ENCODE measurements at regions of chr19 and their contacts with region 1.

Region 1: DNA sequence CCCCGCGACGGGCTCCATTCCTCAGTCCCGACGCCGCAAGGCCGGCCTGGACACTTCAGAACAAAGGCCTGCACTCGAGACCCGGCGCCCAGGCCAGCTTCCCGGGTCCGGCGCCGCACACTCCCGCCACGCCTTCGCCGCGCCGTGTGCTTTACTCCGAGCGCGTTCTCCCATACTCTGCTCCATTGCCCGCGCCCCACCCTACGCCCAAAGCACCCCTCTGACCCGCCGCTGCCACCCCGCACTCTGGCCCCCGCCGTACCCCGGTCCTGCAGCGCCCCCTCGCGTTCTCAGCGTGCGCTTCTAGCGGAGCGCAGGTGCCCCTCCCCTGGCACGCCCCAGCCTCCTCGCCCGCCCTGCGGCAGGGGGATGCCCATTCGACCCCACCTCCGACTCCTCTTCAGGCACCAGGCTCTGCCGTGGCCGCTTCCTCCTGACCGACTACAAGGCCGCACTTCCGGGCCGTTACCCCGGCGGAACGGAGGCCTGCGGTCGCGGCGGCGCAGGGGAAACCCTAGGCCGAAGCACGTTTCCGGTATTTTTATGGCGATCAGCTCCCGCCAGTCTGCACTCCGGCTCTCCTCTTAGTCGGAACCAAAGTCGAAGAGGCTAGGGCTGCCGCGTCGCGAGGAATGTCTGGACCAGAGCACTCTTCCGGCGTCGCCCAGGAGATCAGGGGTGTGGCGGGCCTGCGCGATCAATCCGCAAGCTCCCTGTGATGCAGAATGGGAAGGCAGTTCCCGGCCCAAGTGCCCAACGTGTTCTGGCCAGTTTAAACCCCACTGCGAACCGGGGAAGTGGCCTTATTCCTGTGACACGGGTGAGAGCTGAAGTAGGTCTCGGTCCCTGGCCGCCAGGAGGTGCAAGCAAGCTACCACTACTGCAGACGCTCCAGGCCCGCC is at the start of gene ZBTB45:
- DNase-seq: peak; percentile 94
- ATAC-seq: peak; percentile 84
- H3K4me3 Mint-ChIP-seq: peak within 1 kb of the TSS; percentile 96
- H3K27ac Mint-ChIP-seq: peak within 1 kb of the TSS; percentile 92
- H3K4me1 Mint-ChIP-seq: peaks cover 50% of the 10 kb centered on the region
- H3K27me3 Mint-ChIP-seq: no peaks in the 10 kb centered on the region
- total RNA-seq, gene ZBTB45: 15.1 to 16.9 TPM

Region 2: GRCh38 chr19:58182989-58183816 is 336.4 kb before region 1 on chr19 and contains the start of gene ZNF274:
- CTCF ChIA-PET with region 1: interaction called, 10 read pairs
- DNase-seq: peak; percentile 96
- ATAC-seq: peak; percentile 91
- H3K4me3 Mint-ChIP-seq: peak within 1 kb of the TSS; percentile 92
- H3K27ac Mint-ChIP-seq: peak within 1 kb of the TSS; percentile 100
- H3K4me1 Mint-ChIP-seq: peaks cover 22% of the 10 kb centered on the region
- H3K27me3 Mint-ChIP-seq: no peaks in the 10 kb centered on the region
- total RNA-seq, gene ZNF274: 30.1 to 36.0 TPM

Region 3: GRCh38 chr19:58296104-58296503 is 223.5 kb before region 1 on chr19:
- CTCF ChIA-PET with region 1: no interaction called
- DNase-seq: no peak
- ATAC-seq: no peak
- H3K4me3 Mint-ChIP-seq: no peak overlapping the region
- H3K27ac Mint-ChIP-seq: no peak overlapping the region
- H3K4me1 Mint-ChIP-seq: no peaks in the 10 kb centered on the region
- H3K27me3 Mint-ChIP-seq: no peaks in the 10 kb centered on the region

Region 4: DNA sequence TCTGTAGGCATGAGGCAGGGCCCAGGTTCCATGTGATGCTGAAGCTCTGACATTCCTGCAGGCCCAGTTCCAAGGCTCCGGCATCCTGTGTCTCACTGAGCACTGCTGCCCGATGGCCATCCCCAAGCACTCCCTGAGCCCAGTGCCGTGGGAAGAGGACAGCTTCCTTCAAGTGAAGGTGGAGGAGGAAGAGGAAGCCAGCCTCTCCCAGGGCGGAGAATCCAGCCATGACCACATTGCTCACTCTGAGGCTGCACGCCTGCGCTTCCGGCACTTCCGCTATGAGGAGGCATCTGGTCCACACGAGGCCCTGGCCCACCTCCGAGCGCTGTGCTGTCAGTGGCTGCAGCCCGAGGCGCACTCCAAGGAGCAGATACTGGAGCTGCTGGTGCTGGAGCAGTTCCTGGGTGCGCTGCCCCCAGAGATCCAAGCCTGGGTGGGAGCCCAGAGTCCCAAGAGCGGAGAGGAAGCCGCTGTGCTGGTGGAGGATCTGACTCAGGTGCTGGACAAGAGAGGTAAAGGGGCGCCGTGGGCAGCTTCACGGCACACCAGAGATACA is 184.8 kb before region 1 on chr19:
- CTCF ChIA-PET with region 1: no interaction called
- DNase-seq: no peak
- ATAC-seq: no peak
- H3K4me3 Mint-ChIP-seq: no peak overlapping the region
- H3K27ac Mint-ChIP-seq: no peak overlapping the region
- H3K4me1 Mint-ChIP-seq: peaks cover 1% of the 10 kb centered on the region
- H3K27me3 Mint-ChIP-seq: no peaks in the 10 kb centered on the region

Region 5: DNA sequence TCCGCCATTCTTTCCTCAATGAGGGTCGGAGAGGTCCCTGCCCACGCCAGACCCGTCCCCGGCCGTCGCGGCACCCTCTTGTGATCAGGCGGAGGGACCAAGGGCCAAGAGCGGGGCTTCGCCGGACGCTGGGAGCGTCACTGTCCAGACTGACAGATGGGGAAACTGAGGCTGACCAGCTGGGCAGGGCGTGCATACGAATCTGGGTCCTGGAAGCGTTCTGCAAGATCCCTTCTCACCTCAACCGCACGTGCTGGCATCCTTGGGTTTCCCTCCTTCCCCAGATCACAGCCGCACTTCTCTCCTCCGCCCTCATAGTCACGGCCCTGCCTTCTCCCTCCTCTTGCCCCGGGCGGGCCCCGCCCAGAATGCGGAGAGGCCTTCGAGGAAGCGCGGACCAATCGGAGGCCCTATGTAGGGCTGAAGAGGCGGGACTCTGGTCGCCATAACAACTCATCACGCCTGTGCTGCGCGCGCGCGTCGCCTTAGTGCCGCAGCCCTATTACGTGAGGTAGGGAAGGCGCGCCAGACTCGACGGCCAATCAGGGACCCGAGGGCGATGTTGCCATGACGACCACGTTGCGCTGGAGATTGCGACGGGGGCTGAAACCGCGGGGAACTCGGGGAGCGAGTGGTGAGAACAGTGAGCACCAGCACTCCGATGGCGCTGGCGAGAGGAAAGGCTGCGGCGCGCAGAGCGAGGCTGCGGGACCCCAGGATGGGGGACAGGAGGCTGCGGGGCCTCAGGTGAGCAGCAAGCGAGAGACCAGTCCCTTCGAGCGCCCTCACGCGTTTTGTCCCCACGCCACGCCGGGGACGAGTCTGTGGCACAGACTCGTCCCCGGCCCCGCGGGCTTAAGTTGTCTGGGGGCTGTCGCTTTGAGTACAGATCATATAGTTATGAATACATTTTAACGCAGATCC is 118.4 kb before region 1 on chr19:
- CTCF ChIA-PET with region 1: no interaction called
- DNase-seq: peak; percentile 100
- ATAC-seq: peak; percentile 98
- H3K4me3 Mint-ChIP-seq: peak overlapping the region; percentile 90
- H3K27ac Mint-ChIP-seq: peak overlapping the region; percentile 91
- H3K4me1 Mint-ChIP-seq: peaks cover 30% of the 10 kb centered on the region
- H3K27me3 Mint-ChIP-seq: peaks cover 8% of the 10 kb centered on the region

Region 6: DNA sequence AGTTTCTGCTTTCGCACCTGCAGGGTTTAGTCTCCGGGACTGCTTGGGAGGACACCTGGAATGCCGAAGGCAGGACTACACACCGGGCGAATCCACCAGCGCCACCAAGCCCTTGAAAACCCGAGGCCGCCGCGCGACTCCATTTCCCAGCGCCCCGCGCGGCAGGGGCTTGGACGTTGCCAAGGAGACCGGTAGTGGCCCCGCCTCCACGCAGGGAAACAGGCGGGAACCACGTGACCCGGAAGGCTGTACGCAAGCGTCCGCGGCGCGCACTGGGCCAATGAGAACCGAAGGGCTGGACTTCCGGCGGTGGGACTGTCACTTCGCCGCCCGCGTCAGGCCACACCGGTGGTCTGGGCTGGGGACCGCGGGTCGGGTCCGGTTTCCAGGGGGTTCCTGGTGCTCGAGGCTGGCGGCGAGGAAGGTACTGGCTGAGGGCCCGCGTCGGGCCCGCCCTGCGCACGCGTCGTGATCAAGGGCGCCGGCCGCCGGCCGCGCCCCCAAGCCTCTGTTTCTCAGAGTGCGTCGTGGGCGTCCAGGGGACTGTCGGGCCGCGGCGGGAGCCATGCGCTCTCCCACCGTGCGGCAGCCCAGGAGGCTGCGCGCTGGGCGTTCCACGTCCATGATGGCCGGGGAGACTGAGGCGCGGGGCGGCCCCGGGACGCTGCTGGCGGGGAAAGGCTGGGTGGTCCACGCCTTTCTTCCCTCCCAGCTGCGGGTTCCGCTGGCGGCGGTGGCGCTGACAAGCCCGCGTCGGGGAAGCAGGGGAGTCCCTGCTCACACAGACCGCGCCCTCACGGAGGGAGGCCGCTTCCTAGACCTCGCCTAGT is 52.6 kb before region 1 on chr19 and contains the start of gene ZNF324:
- CTCF ChIA-PET with region 1: interaction called, 10 read pairs
- DNase-seq: peak; percentile 99
- ATAC-seq: peak; percentile 91
- H3K4me3 Mint-ChIP-seq: peak within 1 kb of the TSS; percentile 76
- H3K27ac Mint-ChIP-seq: peak within 1 kb of the TSS; percentile 66
- H3K4me1 Mint-ChIP-seq: peaks cover 21% of the 10 kb centered on the region
- H3K27me3 Mint-ChIP-seq: peaks cover 2% of the 10 kb centered on the region
- total RNA-seq, gene ZNF324: 12.8 to 13.9 TPM

Region 7: DNA sequence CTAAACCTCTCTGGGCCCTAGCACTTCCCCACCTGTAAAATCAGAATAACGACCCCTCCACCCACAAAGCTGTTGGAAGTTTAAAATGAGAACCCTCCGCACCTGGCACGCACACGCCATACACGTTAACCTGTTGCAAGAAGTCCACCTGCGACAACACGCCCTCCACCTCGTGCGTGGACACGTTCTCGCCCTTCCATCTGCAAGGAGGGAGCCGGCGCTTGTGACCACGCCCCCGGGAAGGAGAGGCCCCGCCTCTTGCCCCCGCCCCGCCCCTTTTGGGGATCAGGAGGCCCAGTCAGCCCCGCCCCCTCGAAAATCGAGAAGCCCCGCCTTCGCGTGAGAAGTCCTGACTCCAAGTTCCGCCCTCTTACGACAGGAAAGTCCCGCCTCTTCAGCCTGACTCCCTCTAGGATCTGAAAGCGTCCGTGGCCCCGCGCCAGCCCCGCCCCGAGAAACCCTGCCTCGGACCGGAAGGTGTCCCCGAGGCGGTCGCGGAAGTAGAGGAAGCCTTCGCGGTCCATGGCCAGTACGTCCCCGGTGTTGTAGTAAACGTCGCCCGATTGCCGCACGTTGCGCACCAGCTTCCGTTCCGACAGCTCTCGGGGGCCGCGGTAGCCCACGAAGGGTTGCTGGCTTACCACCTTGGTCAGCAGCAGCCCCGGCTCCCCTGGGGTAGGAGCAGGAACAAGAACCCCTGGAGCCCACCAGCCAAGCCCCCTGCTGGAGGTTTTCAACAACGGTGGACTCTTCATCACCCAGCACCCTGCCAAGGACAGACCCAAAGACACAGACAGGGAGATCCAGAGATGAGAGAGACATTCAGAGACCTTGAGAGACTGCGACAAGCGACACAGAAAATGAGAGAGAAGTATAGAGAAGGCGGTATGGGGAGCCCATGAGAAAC is 20.3 kb before region 1 on chr19:
- CTCF ChIA-PET with region 1: interaction called, 30 read pairs
- DNase-seq: peak; percentile 100
- ATAC-seq: peak; percentile 96
- H3K4me3 Mint-ChIP-seq: peak overlapping the region; percentile 80
- H3K27ac Mint-ChIP-seq: peak overlapping the region; percentile 88
- H3K4me1 Mint-ChIP-seq: peaks cover 33% of the 10 kb centered on the region
- H3K27me3 Mint-ChIP-seq: peaks cover 5% of the 10 kb centered on the region

Region 8: DNA sequence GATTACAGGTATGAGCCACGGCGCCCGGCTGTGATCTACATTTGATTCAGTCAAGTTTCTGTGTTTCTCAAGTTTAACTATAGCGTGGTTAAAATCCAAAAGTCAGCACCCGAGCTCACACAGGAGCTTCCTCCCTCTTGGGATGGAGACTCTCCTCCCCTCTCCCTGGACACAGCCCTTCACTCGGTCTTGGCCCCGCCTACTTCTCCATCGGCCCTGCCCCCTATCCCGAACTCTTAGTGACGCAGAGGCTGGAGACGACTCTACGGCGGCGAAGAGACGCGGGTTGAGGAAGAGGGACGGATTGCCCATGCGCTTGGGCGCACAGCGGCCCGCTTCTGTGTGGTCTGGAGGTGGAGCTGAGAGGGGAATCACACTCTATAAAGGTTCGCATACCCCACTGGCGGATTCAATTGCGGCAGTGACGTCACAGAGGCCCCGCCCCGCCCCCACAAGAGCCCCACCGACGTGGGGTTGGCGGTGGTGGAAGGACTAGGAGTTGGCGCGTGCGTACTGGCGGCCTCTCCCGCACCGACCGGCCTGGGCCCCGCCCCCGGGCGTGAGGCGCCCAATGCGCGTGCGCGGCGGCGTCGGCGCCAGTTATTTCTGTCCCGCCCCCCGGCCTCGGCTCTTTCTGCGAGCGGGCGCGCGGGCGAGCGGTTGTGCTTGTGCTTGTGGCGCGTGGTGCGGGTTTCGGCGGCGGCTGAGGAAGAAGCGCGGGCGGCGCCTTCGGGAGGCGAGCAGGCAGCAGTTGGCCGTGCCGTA is 24.4 kb after region 1 on chr19 and contains the start of gene TRIM28:
- CTCF ChIA-PET with region 1: interaction called, 36 read pairs
- DNase-seq: peak; percentile 100
- ATAC-seq: peak; percentile 93
- H3K4me3 Mint-ChIP-seq: peak within 1 kb of the TSS; percentile 96
- H3K27ac Mint-ChIP-seq: peak within 1 kb of the TSS; percentile 94
- H3K4me1 Mint-ChIP-seq: peaks cover 33% of the 10 kb centered on the region
- H3K27me3 Mint-ChIP-seq: peaks cover 9% of the 10 kb centered on the region
- total RNA-seq, gene TRIM28: 488 to 571 TPM

Region 9: DNA sequence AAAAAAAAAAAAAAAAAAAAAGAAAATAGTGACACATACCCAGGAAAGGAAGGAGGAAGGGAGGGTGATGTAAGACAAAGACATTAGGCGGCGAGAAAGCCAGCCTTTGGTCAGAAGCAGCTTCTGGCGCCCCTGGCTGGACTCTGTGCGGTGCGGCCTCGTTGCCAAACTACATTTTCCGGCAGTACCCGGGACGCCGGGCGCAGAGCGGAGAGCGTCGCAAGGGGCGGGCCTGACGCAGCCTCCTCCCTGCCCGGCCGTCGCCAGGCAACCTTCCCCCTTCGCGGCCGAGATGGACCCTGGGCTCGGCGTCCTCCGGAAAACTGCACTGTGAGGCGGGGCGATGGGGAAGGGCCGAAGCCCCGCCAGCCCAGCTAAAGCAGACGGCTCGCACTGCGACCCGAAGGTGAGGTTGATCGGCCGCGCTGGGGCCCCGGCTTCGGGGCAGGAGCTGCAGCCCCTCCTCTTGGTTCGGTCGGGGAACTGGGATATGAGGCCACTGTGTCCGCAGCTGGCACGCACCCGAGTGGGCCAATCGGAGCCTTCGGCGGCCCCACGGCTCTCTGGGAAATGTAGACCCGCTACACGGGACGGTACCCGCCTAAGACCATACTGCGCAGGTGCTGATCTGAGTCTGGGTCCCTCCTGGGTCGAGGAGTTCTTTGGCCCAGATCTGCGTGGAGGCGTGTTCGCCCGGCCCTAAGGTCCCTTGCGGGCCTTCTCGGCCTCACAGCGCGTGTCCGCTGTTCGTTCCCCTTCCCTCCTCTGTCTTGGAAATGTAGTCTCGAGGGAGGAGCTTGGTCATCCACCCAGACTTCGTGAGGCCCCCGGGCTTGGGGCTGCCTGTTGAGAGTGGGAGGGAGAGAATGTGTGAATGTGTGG is 55.8 kb after region 1 on chr19:
- CTCF ChIA-PET with region 1: interaction called, 153 read pairs
- DNase-seq: peak; percentile 91
- ATAC-seq: peak; percentile 46
- H3K4me3 Mint-ChIP-seq: peak overlapping the region; percentile 82
- H3K27ac Mint-ChIP-seq: peak overlapping the region; percentile 84
- H3K4me1 Mint-ChIP-seq: peaks cover 37% of the 10 kb centered on the region
- H3K27me3 Mint-ChIP-seq: no peaks in the 10 kb centered on the region

Measured in activated CD8-positive, alpha-beta memory T cell treated with anti-CD3 and anti-CD28 coated beads, Interleukin-2, amount 10 ng/mL, durations not matched to agents 7 days and 5 days (primary cell).